Heart left ventricle (tissue), 16 donors: ENCODE measurements at regions of chr11 and their contacts with region 1.

Region 1: GRCh38 chr11:40797981-40798380 is 661.5 kb downstream of the LRRC4C start:
- DNase-seq: no peak
- ATAC-seq: no peak
- H3K4me3 ChIP-seq: no peak overlapping the region
- H3K27ac ChIP-seq: no peak overlapping the region
- H3K4me1 ChIP-seq: no peaks in the 10 kb centered on the region
- H3K27me3 ChIP-seq: no peaks in the 10 kb centered on the region
- CTCF ChIP-seq: no peak
- POLR2A ChIP-seq: no peak

Region 2: DNA sequence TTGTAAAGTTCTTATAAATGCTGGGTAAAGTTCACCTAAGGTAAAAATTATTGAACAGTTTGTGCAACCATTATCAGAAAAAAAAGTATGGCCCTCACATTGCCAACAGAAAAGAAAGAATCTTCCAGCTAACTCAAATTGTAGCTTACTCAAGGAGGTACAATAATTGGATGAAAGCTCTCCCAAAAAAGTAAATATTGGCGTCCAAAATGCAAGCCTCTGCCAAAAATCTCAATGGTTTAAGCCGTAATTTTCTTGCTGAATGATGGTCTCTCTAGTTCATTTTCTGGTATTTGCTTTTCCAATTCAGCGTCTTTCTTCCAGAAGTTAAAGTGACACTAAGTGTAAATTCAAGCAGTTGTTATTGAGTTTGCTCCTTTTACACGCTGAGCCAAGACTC is 65.8 kb before region 1 on chr11:
- intact Hi-C with region 1: no loop called
- DNase-seq: no peak
- ATAC-seq: no peak
- H3K4me3 ChIP-seq: no peak overlapping the region
- H3K27ac ChIP-seq: no peak overlapping the region
- H3K4me1 ChIP-seq: no peaks in the 10 kb centered on the region
- H3K27me3 ChIP-seq: no peaks in the 10 kb centered on the region
- CTCF ChIP-seq: no peak
- POLR2A ChIP-seq: no peak

Region 3: GRCh38 chr11:40746282-40746681 is 51.7 kb before region 1 on chr11:
- intact Hi-C with region 1: loop called in 2 of 10 experiments (anchors 10 kb)
- DNase-seq: no peak
- ATAC-seq: peak in 1 of 4 donors; percentile 13
- H3K4me3 ChIP-seq: no peak overlapping the region
- H3K27ac ChIP-seq: no peak overlapping the region
- H3K4me1 ChIP-seq: no peaks in the 10 kb centered on the region
- H3K27me3 ChIP-seq: no peaks in the 10 kb centered on the region
- CTCF ChIP-seq: no peak
- POLR2A ChIP-seq: no peak

Region 4: GRCh38 chr11:40787224-40787623 is 10.8 kb before region 1 on chr11:
- intact Hi-C with region 1: no loop called
- DNase-seq: no peak
- ATAC-seq: no peak
- H3K4me3 ChIP-seq: no peak overlapping the region
- H3K27ac ChIP-seq: no peak overlapping the region
- H3K4me1 ChIP-seq: no peaks in the 10 kb centered on the region
- H3K27me3 ChIP-seq: no peaks in the 10 kb centered on the region
- CTCF ChIP-seq: no peak
- POLR2A ChIP-seq: no peak

Region 5: GRCh38 chr11:41201156-41201555 is 403.2 kb after region 1 on chr11:
- intact Hi-C with region 1: no loop called
- DNase-seq: no peak
- ATAC-seq: peak in 2 of 4 donors; percentile 34 to 46
- H3K4me3 ChIP-seq: no peak overlapping the region
- H3K27ac ChIP-seq: no peak overlapping the region
- H3K4me1 ChIP-seq: no peaks in the 10 kb centered on the region
- H3K27me3 ChIP-seq: no peaks in the 10 kb centered on the region
- CTCF ChIP-seq: peak in 9 of 12 donors; percentile 16 to 52 (median 39)
- POLR2A ChIP-seq: no peak